GM18951 (cell line): ENCODE measurements at regions of chr7 and their contacts with region 1.

Region 1: DNA sequence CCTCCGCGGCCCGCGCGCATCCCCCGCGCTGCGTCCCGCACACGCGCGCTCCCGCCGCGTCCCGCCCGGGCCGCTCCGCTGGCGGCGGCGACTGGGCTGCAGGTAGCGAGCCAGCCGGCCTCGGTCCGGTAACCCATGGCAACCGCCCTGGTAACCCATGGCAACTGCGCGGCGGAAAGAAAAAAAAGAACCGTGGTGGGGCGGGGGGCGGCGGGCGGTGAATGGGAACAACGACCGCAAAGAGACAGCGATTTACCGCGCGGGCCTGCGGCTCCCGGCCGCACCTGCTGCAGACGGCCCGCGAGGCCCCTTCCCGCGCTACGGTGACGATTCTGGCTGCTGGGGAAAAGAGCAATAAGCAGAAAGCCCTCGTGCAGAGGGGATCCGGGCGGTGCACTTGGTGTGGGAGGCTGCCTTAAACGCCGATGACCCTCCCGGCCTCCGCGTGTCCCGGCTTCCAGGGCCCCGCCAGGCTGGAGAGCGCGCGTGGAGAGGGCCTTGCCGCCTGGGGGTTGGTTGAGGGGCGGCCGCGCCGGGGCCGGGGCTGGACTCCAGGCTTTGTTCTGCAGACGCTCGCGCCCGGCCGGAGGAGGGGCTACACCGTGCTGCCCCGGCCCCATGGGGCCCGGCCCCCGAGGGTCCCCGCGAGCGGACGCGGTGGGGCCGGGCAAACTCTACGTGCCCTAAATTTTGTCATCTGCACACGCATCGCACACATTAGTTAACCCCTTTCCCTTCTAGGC is 84.7 kb downstream of the SNX10 start:
- POLR2A ChIP-seq: no peak

Region 2: GRCh38 chr7:26265065-26265464 is 111.3 kb before region 1 on chr7:
- in situ Hi-C with region 1: no loop called
- POLR2A ChIP-seq: no peak

Region 3: DNA sequence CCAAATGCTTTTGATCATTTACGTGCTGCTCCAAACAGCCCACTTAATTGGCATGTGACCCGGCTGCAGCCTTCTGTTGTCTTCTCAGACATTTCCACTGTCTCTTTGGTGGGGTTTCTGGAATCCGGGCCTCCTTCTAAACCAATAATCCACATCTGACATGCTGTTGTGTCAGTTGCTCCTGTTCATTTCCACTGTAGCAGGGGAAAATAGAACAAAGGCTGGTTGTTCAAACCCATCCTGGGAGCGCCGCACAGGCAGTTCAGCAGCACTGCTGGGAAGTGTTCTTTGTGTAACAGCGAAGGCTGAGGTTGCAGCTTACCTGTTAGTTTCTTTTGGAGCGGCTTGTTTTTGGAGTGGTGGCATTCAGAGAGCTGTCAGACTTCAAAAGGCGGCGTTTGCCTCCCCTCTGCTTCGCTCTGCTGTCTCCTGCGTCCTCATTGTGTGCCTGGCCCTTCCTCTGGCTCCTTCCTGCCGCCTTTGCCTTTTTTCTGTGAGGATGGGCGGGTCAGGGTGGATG is 64.7 kb after region 1 on chr7:
- in situ Hi-C with region 1: no loop called
- POLR2A ChIP-seq: no peak

Region 4: GRCh38 chr7:26653430-26653911 is 277.1 kb after region 1 on chr7:
- in situ Hi-C with region 1: loop called (anchors 10 kb)
- POLR2A ChIP-seq: no peak

Region 5: DNA sequence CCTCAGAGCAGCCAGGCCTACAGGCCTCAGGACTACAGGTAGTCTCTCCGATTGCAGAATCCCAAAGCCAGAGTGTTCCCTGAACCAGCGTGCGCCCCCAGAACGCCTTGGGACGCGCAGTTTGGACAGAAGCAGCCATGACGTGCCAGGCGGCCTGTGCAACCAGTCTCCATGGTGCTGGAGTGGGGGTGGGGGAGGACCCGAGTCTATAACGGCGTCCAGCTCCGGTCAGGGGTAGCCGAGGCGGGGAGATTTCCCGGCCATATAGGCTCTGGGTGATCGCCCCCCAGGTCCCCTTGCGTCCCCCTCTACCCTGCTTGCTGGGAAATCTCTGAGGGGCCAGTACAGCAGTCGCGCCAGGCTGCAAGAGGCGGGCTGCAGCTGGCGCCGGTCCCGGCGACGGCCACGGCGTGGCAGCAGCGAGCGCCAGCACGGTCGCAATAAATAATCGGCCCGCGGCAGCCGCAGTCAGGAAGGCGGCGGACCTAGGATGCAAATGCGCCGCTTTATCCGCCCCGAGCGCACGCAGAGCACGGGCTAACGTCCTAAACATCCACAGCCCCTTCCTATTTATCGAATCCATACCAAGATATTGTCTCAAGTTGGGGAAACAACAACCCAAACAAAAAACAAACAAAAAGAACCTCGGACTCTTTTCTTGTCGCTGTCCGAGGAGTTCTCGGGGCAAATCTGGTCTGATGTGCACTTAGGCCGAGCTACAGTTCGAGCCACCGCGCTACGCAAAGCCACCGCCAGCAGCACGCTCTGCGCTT is 774.4 kb after region 1 on chr7:
- in situ Hi-C with region 1: loop called (anchors 10 kb)
- POLR2A ChIP-seq: no peak